ENCODE measurements at regions of chr16 and their contacts with region 1.

Region 1: DNA sequence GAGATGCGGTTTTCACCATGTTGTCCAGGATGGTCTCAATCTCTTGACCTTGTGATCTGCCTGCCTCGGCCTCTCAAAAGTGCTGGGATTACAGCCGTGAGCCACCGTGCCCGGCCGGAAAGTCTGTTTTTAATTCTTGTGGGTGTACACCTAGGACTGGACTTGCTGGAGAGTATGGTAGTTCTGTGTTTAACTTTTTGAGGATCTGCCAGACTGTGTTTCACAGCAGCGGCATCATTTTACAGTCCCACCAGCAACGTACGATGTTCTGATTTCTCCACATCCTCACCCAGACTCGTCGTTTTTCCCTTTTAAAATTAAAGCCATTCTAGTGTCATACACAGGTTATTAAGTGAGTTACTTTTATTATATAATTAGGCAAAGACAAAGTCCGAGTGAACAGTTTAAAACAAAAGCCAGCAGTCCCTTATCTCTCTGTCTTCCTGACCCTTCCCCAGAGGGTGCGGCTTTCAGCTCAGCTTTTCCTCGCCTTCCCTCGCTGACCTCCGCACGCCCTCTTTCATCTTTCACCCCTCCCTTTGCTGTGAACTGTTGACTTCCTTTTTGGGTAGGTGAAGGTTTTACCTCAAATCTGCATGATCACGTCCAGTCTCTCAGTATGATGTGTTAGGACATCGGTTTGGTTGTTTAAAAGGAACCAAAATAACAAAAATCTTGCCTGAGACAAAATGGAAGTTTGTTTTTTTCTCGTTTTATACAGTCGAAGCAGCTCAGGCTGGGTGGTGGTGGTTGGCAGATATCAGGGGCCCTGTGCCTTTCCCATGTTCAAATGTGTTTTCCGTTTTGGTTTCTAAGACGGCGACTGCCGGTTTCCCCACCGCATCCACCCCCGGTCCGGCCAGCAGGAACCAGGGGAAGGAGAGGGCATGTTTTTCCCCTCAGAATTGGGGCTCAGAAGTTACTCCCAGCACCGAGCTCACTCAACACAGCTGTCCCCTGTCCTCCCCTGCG is 18.0 kb downstream of the FAM234A start:
- DNase-seq: peak; percentile 40
- ATAC-seq: peak; percentile 89
- H3K4me3 ChIP-seq: peak overlapping the region; percentile 45
- H3K27ac ChIP-seq: peak overlapping the region; percentile 69
- H3K4me1 ChIP-seq: peaks cover 4% of the 10 kb centered on the region; the same call in 1 of the 2 replicates
- H3K27me3 ChIP-seq: no peaks in the 10 kb centered on the region
- CTCF ChIP-seq: no peak
- EP300 ChIP-seq: no peak
- POLR2A ChIP-seq: no peak
- RAD21 ChIP-seq: no peak

Region 2: DNA sequence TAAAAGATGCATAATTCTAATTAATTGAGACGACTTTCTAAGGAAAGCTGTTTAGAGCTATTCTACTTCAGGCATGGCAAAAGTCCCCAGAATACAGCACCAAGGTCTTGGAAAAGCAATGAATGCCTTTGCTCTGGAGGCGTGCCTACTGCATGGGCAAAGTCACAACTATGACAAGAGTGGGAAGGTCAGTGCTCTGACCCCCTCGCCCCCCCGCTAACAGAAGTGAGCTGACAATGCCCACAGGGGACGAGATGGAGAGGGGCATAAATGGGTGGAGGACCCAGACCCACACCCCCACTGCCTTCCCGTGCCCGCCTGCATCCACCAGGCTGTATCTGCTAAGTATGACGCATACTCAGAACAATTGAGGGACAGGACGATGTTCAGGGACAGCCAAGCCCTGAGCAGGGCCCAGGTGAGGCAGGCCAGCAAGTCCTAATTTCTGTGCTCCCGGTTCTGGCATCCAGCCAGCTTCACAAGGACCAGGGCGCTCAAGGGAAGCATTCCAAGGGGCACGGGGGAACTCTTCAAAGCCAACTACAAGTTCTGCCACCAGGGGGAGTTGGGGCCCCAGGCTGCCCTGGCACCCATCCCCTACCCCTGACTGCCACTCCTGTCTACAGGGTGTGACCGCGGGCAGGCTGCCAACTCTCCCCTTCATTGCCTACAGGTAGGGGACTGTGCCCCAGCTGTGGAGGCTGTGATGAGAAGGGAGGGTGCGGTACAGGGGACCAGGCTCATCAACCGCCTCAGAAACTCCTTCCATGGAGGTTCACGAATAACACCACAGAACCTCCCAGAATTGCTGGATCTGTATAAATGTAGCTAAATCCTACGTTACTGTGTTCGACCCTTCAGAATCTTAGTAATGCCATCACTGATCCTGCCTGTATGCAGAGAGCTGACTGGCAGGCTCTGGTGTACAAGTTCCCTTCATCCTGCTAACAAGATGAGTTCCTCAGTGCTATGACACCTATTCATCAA is 135.0 kb before region 1 on chr16:
- CTCF ChIA-PET with region 1: no interaction called
- POLR2A ChIA-PET with region 1: no interaction called
- RAD21 ChIA-PET with region 1: no interaction called
- SMC1A ChIA-PET with region 1: no interaction called
- in situ Hi-C with region 1: no loop called
- intact Hi-C with region 1: no loop called
- DNase-seq: no peak
- ATAC-seq: peak; percentile 95
- H3K4me3 ChIP-seq: no peak overlapping the region
- H3K27ac ChIP-seq: no peak overlapping the region
- H3K4me1 ChIP-seq: no peaks in the 10 kb centered on the region
- H3K27me3 ChIP-seq: no peaks in the 10 kb centered on the region
- CTCF ChIP-seq: peak; percentile 69 to 78 (median 71)
- EP300 ChIP-seq: no peak
- POLR2A ChIP-seq: no peak
- RAD21 ChIP-seq: peak; percentile 45

Region 3: GRCh38 chr16:138049-138417 is 114.6 kb before region 1 on chr16:
- CTCF ChIA-PET with region 1: no interaction called
- POLR2A ChIA-PET with region 1: no interaction called
- RAD21 ChIA-PET with region 1: no interaction called
- SMC1A ChIA-PET with region 1: no interaction called
- in situ Hi-C with region 1: no loop called
- intact Hi-C with region 1: no loop called
- DNase-seq: no peak
- ATAC-seq: peak; percentile 45
- H3K4me3 ChIP-seq: peak overlapping the region; percentile 95
- H3K27ac ChIP-seq: peak overlapping the region; percentile 74
- H3K4me1 ChIP-seq: peaks cover 3% of the 10 kb centered on the region; the same call in 1 of the 2 replicates
- H3K27me3 ChIP-seq: no peaks in the 10 kb centered on the region
- CTCF ChIP-seq: no peak
- EP300 ChIP-seq: no peak
- POLR2A ChIP-seq: no peak
- RAD21 ChIP-seq: no peak

Region 4: GRCh38 chr16:212999-213398 is 39.7 kb before region 1 on chr16:
- CTCF ChIA-PET with region 1: no interaction called
- POLR2A ChIA-PET with region 1: no interaction called
- RAD21 ChIA-PET with region 1: no interaction called
- SMC1A ChIA-PET with region 1: no interaction called
- in situ Hi-C with region 1: no loop called
- intact Hi-C with region 1: no loop called
- DNase-seq: no peak
- ATAC-seq: no peak
- H3K4me3 ChIP-seq: no peak overlapping the region
- H3K27ac ChIP-seq: no peak overlapping the region
- H3K4me1 ChIP-seq: no peaks in the 10 kb centered on the region
- H3K27me3 ChIP-seq: no peaks in the 10 kb centered on the region
- CTCF ChIP-seq: no peak
- EP300 ChIP-seq: no peak
- POLR2A ChIP-seq: no peak
- RAD21 ChIP-seq: no peak

Region 5: DNA sequence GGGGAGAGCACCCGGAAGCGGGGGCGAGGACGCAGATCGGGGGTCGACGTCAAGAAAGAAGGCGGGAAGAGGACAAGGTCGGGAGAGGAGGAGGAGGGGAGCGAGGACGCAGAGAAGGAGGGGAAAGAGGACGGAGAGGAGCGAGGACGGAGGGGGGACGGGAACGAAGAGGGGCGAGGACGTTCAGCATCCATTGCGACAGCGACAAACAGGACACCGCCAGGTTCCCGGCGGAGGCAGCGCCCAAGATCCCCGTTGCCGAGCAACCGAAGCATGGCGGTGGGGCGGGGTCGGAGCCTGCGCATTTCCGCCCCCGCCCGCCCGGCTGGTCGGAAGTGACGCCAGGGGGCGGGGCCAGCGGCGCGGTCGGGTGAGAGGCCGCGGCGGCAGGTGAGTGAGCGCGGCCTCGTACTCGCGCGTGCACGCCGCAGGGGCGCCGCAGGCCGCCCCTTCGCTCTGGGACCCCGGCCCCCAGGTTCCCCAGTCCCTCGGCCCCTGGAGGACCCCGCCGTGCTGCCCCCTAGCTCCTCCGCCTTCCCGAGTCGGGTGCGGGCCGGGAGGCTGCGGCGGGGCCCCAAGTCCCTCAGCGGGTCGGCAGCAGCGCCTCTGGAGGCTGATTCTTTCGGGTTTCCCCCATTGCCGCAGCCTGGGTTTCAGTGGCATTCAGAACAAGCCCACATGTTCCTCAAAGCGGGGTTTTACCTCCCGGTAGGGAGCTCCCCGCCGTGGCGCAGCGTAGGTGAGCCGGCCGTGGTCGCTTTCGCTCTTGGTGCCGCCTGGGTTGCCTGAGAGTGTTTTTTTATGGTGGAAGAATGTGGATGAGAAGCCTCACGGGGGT is 18.0 kb before region 1 on chr16 and contains the start of gene FAM234A:
- CTCF ChIA-PET with region 1: interaction called, 4 read pairs
- POLR2A ChIA-PET with region 1: interaction called, 26 read pairs
- RAD21 ChIA-PET with region 1: interaction called, 13 read pairs
- SMC1A ChIA-PET with region 1: interaction called, 8 read pairs
- in situ Hi-C with region 1: no loop called
- intact Hi-C with region 1: loop called (anchors 2 kb)
- DNase-seq: peak; percentile 77
- ATAC-seq: peak; percentile 96
- H3K4me3 ChIP-seq: peak within 1 kb of the TSS; percentile 81
- H3K27ac ChIP-seq: peak within 1 kb of the TSS; percentile 84
- H3K4me1 ChIP-seq: peaks cover 2% of the 10 kb centered on the region; the same call in 1 of the 2 replicates
- H3K27me3 ChIP-seq: no peaks in the 10 kb centered on the region
- CTCF ChIP-seq: peak; percentile 37 to 62 (median 55)
- EP300 ChIP-seq: 0 out of 4 replicates have a peak, but pooled peaks of 1 of the 2 experiments have one; percentile 14
- POLR2A ChIP-seq: peak; percentile 87
- RAD21 ChIP-seq: 0 out of 2 replicates have a peak, but pooled peaks have one; percentile 16
- polyA plus RNA-seq, gene FAM234A: 1.6 TPM

Region 6: DNA sequence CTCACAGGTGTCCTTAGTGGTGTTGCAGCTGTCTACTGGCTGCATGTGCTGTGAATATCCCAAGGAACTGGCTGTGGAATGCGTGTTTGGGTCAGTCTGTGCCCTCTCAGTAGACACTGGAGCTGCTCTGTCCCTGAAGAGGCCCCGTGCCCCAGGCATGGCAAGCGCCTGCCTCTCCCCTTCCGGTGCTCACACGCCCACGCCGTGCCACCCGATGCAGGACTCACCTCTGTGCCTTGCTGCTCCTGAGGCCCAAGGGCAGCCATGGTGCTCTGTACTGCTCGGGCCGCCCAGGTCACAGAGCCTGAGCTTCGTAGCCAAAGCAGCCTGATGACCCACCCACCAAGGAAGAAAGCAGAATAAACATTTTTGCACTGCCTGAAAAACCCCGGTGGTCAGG is 13.1 kb after region 1 on chr16:
- CTCF ChIA-PET with region 1: no interaction called
- POLR2A ChIA-PET with region 1: no interaction called
- RAD21 ChIA-PET with region 1: no interaction called
- SMC1A ChIA-PET with region 1: no interaction called
- in situ Hi-C with region 1: no loop called
- intact Hi-C with region 1: no loop called
- DNase-seq: no peak
- ATAC-seq: no peak
- H3K4me3 ChIP-seq: no peak overlapping the region
- H3K27ac ChIP-seq: no peak overlapping the region
- H3K4me1 ChIP-seq: no peaks in the 10 kb centered on the region
- H3K27me3 ChIP-seq: no peaks in the 10 kb centered on the region
- CTCF ChIP-seq: no peak
- EP300 ChIP-seq: no peak
- POLR2A ChIP-seq: peak; percentile 44; the same call in 1 of the 2 replicates
- RAD21 ChIP-seq: no peak